Posterior vena cava (tissue), 2 donors: ENCODE measurements at regions of chr6 and their contacts with region 1.

Region 1: GRCh38 chr6:152236370-152237097 is 400.6 kb downstream of the SYNE1 start:
- DNase-seq: no peak

Region 2: DNA sequence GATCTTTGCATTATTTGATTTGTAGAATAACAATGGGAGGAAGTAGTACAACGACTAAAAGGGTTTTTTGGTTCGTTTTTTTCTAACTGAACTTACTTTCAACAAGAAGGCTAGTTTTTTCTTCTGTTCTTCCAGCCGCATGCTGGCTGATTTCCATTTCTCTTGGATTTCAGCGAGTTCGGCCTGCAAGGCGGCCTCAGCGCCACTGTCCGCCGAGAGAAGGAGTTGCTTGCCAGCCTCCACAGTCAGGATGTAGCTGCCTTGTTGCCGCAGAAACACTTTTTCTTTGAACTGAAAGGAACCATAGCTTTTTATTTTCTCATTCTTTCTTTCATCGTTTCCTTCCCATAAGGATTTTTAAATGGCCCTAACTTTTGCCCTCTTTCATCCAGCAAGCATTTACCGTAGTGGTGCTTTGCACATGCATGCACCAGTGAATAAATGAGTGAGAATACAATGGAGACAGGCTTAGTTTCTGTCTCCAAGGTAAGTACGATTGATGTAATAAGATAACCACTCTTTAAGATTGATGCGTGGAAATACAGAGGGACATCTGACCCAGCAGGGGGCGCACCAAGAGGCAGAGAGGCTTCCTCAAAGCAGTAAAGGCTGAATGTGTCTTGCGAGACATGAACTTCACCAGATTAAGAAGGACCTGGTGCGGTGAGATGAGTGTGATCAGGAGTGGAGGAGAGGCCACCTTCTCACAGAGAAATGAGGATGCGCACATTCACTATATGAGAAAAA is 30.3 kb before region 1 on chr6:
- intact Hi-C with region 1: loop called in 1 of 2 experiments (anchors 2 kb)
- DNase-seq: no peak

Region 3: DNA sequence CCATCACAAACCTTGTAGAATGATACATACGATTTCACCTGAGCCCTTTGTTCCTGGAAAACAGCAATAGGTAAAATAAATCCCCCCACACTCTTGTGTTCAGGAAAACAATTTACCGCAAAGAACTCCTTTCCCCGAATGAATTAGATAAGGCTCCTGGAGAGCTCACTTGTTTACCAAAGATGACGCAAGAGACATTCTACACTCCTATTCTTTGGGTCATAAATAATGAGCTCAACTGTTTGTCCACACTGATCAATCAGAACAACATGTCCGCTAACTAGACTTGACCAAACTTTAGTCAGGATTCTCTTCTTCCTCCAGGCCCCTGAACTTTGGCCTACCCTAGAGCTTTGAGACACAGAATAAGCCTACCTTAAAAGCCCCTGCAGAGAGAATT is 1530.6 kb after region 1 on chr6:
- intact Hi-C with region 1: no loop called
- DNase-seq: no peak